Endothelial cell of umbilical vein (primary cell): ENCODE measurements at regions of chr15 and their contacts with region 1.

Region 1: DNA sequence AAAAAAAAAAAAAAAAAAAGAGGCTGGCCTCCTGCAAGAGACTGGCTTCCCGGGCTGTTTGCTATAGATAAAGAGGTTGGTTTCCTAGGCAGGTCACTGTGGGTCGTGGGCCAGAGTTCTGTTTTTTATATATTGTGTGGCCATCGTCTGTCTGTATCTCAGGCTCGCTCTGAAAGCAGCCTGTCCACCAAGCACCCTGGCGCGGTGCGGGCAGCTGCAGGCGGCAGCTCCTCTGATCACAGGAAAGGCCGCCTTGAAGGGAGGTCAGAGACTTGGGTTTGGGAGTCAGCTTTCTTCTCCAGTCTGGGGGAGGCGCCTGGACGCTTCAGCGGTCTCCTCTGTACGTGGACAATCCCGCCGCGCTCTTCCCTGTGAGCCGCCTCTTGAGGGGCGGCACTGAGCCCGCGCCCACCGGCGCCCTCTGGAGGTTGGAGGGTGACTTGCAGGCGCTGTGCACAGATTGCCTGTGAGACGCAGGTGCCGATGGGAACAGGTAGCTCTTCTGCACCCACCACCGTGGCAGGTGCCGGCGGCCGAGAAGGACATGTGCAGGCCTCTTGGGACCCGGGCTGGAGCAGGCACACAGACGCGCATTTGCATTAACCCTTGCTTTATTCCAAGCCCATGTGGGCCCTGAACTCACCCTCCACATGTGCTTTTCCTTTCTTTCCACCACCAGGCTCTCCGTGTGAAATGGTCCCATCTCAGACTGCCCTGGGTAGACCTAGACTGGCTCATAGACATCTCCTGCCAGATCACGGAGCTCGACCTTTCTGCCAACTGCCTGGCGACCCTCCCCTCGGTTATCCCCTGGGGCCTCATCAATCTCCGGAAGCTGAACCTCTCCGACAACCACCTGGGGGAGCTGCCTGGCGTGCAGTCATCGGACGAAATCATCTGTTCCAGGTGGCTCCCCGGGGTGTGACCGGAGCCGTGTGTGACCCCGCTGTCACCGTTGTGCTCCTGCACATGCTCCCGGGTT is 89.3 kb downstream of the LRRK1 start:
- DNase-seq: peak; percentile 89
- H3K4me3 ChIP-seq: peak overlapping the region in 2 of 3 experiments; percentile 26 to 33
- H3K27ac ChIP-seq: no peak overlapping the region
- H3K4me1 ChIP-seq: peaks cover 6% of the 10 kb centered on the region
- H3K27me3 ChIP-seq: no peaks in the 10 kb centered on the region
- CTCF ChIP-seq: peak; percentile 98 to 100
- POLR2A ChIP-seq: no peak

Region 2: GRCh38 chr15:100341662-100342560 is 666.5 kb before region 1 on chr15 and contains the start of gene ADAMTS17:
- CTCF ChIA-PET with region 1: interaction called, 4 read pairs
- POLR2A ChIA-PET with region 1: no interaction called
- dilution Hi-C with region 1: no loop called
- intact Hi-C with region 1: loop called (anchors 2 kb)
- DNase-seq: peak; percentile 92
- H3K4me3 ChIP-seq: peak within 1 kb of the TSS; percentile 16 to 36 (median 35)
- H3K27ac ChIP-seq: no peak within 1 kb of the TSS
- H3K4me1 ChIP-seq: peaks cover 4% of the 10 kb centered on the region
- H3K27me3 ChIP-seq: peaks cover 2 to 12% of the 10 kb centered on the region in 2 experiments
- CTCF ChIP-seq: peak; percentile 79 to 91
- POLR2A ChIP-seq: no peak
- total RNA-seq, gene ADAMTS17: not detected in 2 replicates

Region 3: GRCh38 chr15:100635406-100636071 is 372.9 kb before region 1 on chr15:
- CTCF ChIA-PET with region 1: interaction called, 20 read pairs
- POLR2A ChIA-PET with region 1: interaction called, 8 read pairs
- dilution Hi-C with region 1: no loop called
- intact Hi-C with region 1: no loop called
- DNase-seq: peak; percentile 25
- H3K4me3 ChIP-seq: no peak overlapping the region
- H3K27ac ChIP-seq: no peak overlapping the region
- H3K4me1 ChIP-seq: no peaks in the 10 kb centered on the region
- H3K27me3 ChIP-seq: no peaks in the 10 kb centered on the region
- CTCF ChIP-seq: no peak
- POLR2A ChIP-seq: no peak

Region 4: GRCh38 chr15:100809151-100809550 is 199.3 kb before region 1 on chr15:
- CTCF ChIA-PET with region 1: no interaction called
- POLR2A ChIA-PET with region 1: no interaction called
- dilution Hi-C with region 1: no loop called
- intact Hi-C with region 1: no loop called
- DNase-seq: peak; percentile 6
- H3K4me3 ChIP-seq: no peak overlapping the region
- H3K27ac ChIP-seq: no peak overlapping the region
- H3K4me1 ChIP-seq: no peaks in the 10 kb centered on the region
- H3K27me3 ChIP-seq: peaks cover 0 to 2% of the 10 kb centered on the region in 2 experiments
- CTCF ChIP-seq: no peak
- POLR2A ChIP-seq: no peak

Region 5: GRCh38 chr15:100873029-100873677 is 135.3 kb before region 1 on chr15:
- CTCF ChIA-PET with region 1: interaction called, 23 read pairs
- POLR2A ChIA-PET with region 1: no interaction called
- dilution Hi-C with region 1: no loop called
- intact Hi-C with region 1: loop called (anchors 1 kb)
- DNase-seq: peak; percentile 82
- H3K4me3 ChIP-seq: no peak overlapping the region
- H3K27ac ChIP-seq: no peak overlapping the region
- H3K4me1 ChIP-seq: no peaks in the 10 kb centered on the region
- H3K27me3 ChIP-seq: peaks cover 5 to 6% of the 10 kb centered on the region in 2 experiments
- CTCF ChIP-seq: peak; percentile 73 to 74
- POLR2A ChIP-seq: no peak

Region 6: GRCh38 chr15:100918034-100918689 is 90.3 kb before region 1 on chr15:
- CTCF ChIA-PET with region 1: interaction called, 371 read pairs
- POLR2A ChIA-PET with region 1: interaction called, 7 read pairs
- dilution Hi-C with region 1: no loop called
- intact Hi-C with region 1: loop called (anchors 1 kb)
- DNase-seq: peak; percentile 78
- H3K4me3 ChIP-seq: peak overlapping the region; percentile 50 to 60 (median 58)
- H3K27ac ChIP-seq: peak overlapping the region; percentile 44
- H3K4me1 ChIP-seq: peaks cover 14% of the 10 kb centered on the region
- H3K27me3 ChIP-seq: no peaks in the 10 kb centered on the region
- CTCF ChIP-seq: peak; percentile 90 to 94
- POLR2A ChIP-seq: no peak

Region 7: GRCh38 chr15:100973351-100974111 is 34.9 kb before region 1 on chr15:
- CTCF ChIA-PET with region 1: interaction called, 19 read pairs
- POLR2A ChIA-PET with region 1: no interaction called
- dilution Hi-C with region 1: no loop called
- intact Hi-C with region 1: loop called (anchors 2 kb)
- DNase-seq: peak; percentile 15
- H3K4me3 ChIP-seq: peak overlapping the region; percentile 20 to 38 (median 37)
- H3K27ac ChIP-seq: no peak overlapping the region
- H3K4me1 ChIP-seq: peaks cover 11% of the 10 kb centered on the region
- H3K27me3 ChIP-seq: no peaks in the 10 kb centered on the region
- CTCF ChIP-seq: no peak
- POLR2A ChIP-seq: no peak

Region 8: GRCh38 chr15:101258238-101259144 is 250.0 kb after region 1 on chr15:
- CTCF ChIA-PET with region 1: interaction called, 68 read pairs
- POLR2A ChIA-PET with region 1: no interaction called
- dilution Hi-C with region 1: no loop called
- intact Hi-C with region 1: no loop called
- DNase-seq: peak; percentile 80
- H3K4me3 ChIP-seq: no peak overlapping the region
- H3K27ac ChIP-seq: no peak overlapping the region
- H3K4me1 ChIP-seq: peaks cover 11% of the 10 kb centered on the region
- H3K27me3 ChIP-seq: peaks cover 0 to 2% of the 10 kb centered on the region in 2 experiments
- CTCF ChIP-seq: peak; percentile 66 to 88
- POLR2A ChIP-seq: no peak